ENCODE measurements at regions of chr2 and their contacts with region 1.

Region 1: DNA sequence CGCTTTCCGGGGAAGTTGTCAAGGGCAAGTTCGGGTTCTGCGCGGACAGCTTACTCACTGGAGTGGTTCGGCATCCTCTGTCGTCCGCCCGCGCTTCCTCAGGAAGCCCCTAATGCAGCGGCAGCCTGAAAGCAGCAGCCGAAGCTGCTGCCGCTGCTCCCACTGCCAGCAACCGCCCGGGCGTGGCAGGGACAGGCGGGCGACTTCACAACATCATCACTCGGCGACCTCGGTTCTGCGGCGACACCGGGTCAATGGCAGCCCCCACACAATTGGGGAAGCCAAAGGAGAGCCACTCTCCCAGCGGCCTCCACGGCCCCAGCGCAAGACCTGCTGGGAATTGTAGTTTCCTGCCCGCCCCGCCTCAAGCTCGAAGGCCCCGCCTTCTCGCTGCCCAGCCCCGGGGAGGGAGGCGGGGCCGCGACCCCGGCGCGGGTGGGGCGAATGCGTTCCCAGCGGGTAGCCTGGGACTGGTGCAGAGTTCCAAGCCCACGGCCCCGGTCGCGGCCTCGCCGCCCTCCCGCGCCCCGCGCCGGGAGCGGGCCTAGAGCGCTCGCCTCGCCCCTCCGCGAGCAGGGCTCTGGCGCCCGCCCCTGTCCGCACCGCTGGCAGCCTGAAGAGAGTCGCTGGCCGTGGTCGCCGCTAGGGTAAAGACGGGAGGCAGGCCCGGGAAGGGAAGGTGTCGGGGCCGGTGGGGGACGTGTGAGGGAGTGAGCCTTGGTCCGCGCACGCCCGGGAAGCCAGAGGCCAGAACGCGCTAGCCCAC is at the starts of genes STRADB and TRAK2:
- DNase-seq: peak; percentile 89 to 98 (median 95)
- ATAC-seq: peak; percentile 89
- H3K4me3 ChIP-seq: peak within 1 kb of the TSS; percentile 64 to 79
- H3K4me3 Mint-ChIP-seq: peak within 1 kb of the TSS; percentile 96
- H3K27ac ChIP-seq: peak within 1 kb of the TSS; percentile 74 to 79
- H3K27ac Mint-ChIP-seq: peak within 1 kb of the TSS; percentile 95
- H3K4me1 ChIP-seq: peaks cover 41% of the 10 kb centered on the region
- H3K4me1 Mint-ChIP-seq: peaks cover 59% of the 10 kb centered on the region
- H3K27me3 ChIP-seq: no peaks in the 10 kb centered on the region
- H3K27me3 Mint-ChIP-seq: no peaks in the 10 kb centered on the region
- CTCF ChIP-seq: no peak
- total RNA-seq, gene STRADB: 4.5 to 5.8 TPM
- total RNA-seq, gene TRAK2: 20.1 to 22.5 TPM

Region 2: GRCh38 chr2:200509612-200510433 is 941.7 kb before region 1 on chr2 and contains the start of gene KCTD18:
- CTCF ChIA-PET with region 1: no interaction called
- POLR2A ChIA-PET with region 1: no interaction called
- intact Hi-C with region 1: loop called in 1 of 2 experiments (anchors 5 kb)
- DNase-seq: peak; percentile 83 to 96 (median 93)
- ATAC-seq: peak; percentile 99
- H3K4me3 ChIP-seq: peak within 1 kb of the TSS; percentile 78 to 79
- H3K4me3 Mint-ChIP-seq: peak within 1 kb of the TSS; percentile 91
- H3K27ac ChIP-seq: peak within 1 kb of the TSS; percentile 61 to 71
- H3K27ac Mint-ChIP-seq: peak within 1 kb of the TSS; percentile 93
- H3K4me1 ChIP-seq: peaks cover 25% of the 10 kb centered on the region
- H3K4me1 Mint-ChIP-seq: peaks cover 42% of the 10 kb centered on the region
- H3K27me3 ChIP-seq: peaks cover 0 to 7% of the 10 kb centered on the region in 2 experiments
- H3K27me3 Mint-ChIP-seq: no peaks in the 10 kb centered on the region
- CTCF ChIP-seq: peak; percentile 75
- total RNA-seq, gene KCTD18: 17.9 to 20.4 TPM

Region 3: DNA sequence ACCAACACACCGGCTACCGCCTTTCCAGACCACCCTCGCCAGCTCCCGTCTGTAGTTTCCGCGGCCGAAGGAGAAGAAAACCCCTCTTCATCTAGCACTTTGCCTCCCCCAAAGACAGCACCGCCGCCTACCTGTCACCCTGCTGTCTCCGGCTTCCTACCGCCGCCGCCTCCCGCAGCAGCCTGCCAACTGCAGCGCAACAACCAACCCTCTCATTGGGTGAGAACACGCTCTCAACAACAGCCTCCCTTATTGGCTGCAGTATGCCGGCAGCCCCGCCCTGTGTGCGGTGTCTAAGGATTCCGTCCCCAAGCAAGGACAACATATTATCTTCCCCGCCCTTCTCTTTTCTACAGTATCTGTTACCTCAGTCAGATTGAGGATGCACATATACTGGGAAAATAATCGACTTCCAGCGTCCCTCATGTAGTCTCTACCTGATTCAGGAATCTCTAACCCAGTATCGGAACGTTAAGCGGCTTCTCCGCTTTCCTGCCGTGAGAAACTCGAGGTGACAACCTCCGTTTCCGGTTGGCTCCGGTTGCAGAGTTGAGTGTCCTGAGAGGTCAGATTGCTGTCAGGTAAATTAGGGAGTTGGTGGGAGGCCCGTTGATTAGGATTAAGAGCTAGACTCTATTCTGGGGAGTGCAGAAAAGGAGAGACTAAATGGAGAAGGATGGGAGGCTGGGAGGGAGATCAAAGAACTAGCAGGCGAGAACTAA is 379.8 kb before region 1 on chr2 and contains the starts of genes HYCC2 and NDUFB3:
- CTCF ChIA-PET with region 1: no interaction called
- POLR2A ChIA-PET with region 1: no interaction called
- intact Hi-C with region 1: loop called (anchors 1 to 2 kb)
- DNase-seq: peak; percentile 79 to 98 (median 92)
- ATAC-seq: peak; percentile 93
- H3K4me3 ChIP-seq: peak within 1 kb of the TSS; percentile 61 to 70
- H3K4me3 Mint-ChIP-seq: peak within 1 kb of the TSS; percentile 95
- H3K27ac ChIP-seq: peak within 1 kb of the TSS; percentile 61 to 81
- H3K27ac Mint-ChIP-seq: peak within 1 kb of the TSS; percentile 97
- H3K4me1 ChIP-seq: peaks cover 42% of the 10 kb centered on the region
- H3K4me1 Mint-ChIP-seq: peaks cover 54% of the 10 kb centered on the region
- H3K27me3 ChIP-seq: no peaks in the 10 kb centered on the region
- H3K27me3 Mint-ChIP-seq: no peaks in the 10 kb centered on the region
- CTCF ChIP-seq: peak; percentile 38
- total RNA-seq, gene HYCC2: 35.7 to 36.8 TPM
- total RNA-seq, gene NDUFB3: 11.6 to 13.1 TPM

Region 4: GRCh38 chr2:201414099-201415023 is 37.1 kb before region 1 on chr2:
- CTCF ChIA-PET with region 1: no interaction called
- POLR2A ChIA-PET with region 1: interaction called, 18 read pairs
- intact Hi-C with region 1: loop called (anchors 2 to 5 kb)
- DNase-seq: peak in 2 of 9 experiments; percentile 24 to 55
- ATAC-seq: peak; percentile 70
- H3K4me3 ChIP-seq: peak overlapping the region; percentile 13 to 25
- H3K4me3 Mint-ChIP-seq: no peak overlapping the region
- H3K27ac ChIP-seq: peak overlapping the region in 1 of 2 experiments; percentile 60
- H3K27ac Mint-ChIP-seq: no peak overlapping the region
- H3K4me1 ChIP-seq: peaks cover 36% of the 10 kb centered on the region
- H3K4me1 Mint-ChIP-seq: peaks cover 34% of the 10 kb centered on the region
- H3K27me3 ChIP-seq: no peaks in the 10 kb centered on the region
- H3K27me3 Mint-ChIP-seq: no peaks in the 10 kb centered on the region
- CTCF ChIP-seq: no peak

Region 5: DNA sequence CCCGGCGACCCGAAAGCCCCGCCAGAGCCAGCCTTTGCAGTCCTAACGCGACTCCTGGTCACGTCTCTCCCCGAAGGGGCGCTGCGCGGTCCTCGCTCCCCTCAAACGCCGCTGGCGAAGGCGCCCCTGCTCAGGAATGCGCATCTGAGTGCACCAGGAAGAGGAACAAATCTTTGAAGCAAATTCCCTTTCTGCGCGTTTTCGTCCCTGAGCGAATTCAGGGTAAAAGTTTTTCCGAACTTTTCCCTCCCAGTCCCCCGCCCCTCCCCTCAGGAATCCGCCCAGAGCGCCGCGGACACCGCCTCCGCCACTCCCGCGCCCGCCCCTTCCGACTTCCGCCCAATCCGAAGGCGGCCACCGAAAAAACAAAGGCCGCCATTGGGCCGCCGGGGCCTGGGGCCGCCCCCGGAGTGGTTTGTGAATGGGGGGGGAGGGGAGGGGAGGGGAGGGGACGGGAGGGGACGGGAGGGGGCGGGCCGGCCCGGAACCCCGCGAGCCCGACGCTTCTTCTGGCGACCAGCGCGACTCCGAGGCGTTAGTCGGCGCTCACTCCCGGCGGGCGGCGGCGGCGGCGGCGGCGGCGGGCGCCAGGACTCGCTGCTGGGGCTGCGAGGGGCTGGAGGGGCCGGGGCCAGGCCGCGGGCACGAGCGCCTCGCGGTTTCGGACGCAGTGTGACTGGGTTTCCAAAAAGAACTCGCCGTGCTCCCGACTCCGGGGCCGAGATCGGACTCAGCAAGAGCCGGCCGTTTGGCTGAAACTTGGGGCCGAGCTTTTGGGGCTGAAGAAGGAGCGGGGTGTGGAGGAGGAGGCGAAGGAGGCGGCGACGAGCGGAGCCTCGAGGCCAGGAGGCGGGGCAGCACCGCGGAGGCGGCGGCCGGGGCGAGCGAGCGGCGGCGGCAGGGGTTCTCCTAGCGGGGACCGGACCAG is 582.1 kb after region 1 on chr2 and contains the start of gene FZD7:
- CTCF ChIA-PET with region 1: no interaction called
- POLR2A ChIA-PET with region 1: no interaction called
- intact Hi-C with region 1: loop called (anchors 2 to 5 kb)
- DNase-seq: peak; percentile 66 to 91 (median 83)
- ATAC-seq: peak; percentile 78
- H3K4me3 ChIP-seq: peak within 1 kb of the TSS; percentile 77 to 84
- H3K4me3 Mint-ChIP-seq: peak within 1 kb of the TSS; percentile 88
- H3K27ac ChIP-seq: peak within 1 kb of the TSS in 1 of 2 experiments; percentile 14
- H3K27ac Mint-ChIP-seq: no peak within 1 kb of the TSS
- H3K4me1 ChIP-seq: peaks cover 25% of the 10 kb centered on the region
- H3K4me1 Mint-ChIP-seq: peaks cover 13% of the 10 kb centered on the region
- H3K27me3 ChIP-seq: peaks cover 26 to 29% of the 10 kb centered on the region in 2 experiments
- H3K27me3 Mint-ChIP-seq: peaks cover 12% of the 10 kb centered on the region
- CTCF ChIP-seq: no peak
- total RNA-seq, gene FZD7: 0.73 to 0.97 TPM

Region 6: DNA sequence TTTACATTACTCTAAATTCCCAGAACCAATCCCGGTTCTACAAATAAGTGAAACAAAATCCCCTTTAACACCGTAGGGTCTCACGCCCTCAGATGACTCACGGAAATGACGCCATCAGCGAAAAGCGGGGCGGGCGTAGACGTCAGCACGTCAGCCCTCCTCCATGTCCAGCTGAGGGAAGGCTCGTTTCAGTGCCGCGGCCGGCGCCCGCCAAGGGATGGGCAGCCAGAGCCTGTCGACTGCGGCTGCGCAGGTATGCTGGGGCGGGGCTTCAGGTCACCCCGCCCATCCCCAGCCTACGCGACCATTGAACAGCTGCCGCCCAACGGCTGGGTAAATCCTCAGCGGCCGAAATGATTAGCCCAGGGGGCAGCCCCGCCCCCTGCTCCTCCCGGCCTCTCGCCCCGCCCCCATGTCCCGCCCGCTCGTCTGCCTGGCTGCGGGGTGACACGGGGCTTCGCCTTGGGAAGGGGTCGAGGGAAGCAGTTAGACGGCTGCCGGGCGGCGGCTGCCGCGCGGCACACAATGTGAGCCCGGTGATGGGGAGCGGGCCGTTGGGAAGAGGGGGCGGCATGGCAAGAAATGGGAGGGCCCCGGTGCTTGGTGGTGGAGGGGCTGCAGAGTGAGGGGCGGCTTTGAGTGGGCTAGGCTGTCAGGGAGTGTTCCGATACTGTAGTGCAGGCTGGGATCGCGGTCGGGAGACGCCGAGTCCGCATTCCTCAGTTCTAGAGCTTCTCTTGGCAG is 1563.2 kb after region 1 on chr2 and contains the start of gene NBEAL1:
- CTCF ChIA-PET with region 1: no interaction called
- POLR2A ChIA-PET with region 1: no interaction called
- intact Hi-C with region 1: loop called in 1 of 2 experiments (anchors 10 kb)
- DNase-seq: peak; percentile 92 to 99 (median 95)
- ATAC-seq: peak; percentile 90
- H3K4me3 ChIP-seq: peak within 1 kb of the TSS; percentile 77 to 97
- H3K4me3 Mint-ChIP-seq: peak within 1 kb of the TSS; percentile 88
- H3K27ac ChIP-seq: peak within 1 kb of the TSS; percentile 86 to 89
- H3K27ac Mint-ChIP-seq: peak within 1 kb of the TSS; percentile 92
- H3K4me1 ChIP-seq: peaks cover 37% of the 10 kb centered on the region
- H3K4me1 Mint-ChIP-seq: peaks cover 46% of the 10 kb centered on the region
- H3K27me3 ChIP-seq: no peaks in the 10 kb centered on the region
- H3K27me3 Mint-ChIP-seq: no peaks in the 10 kb centered on the region
- CTCF ChIP-seq: no peak
- total RNA-seq, gene NBEAL1: 11.2 to 13.2 TPM